HEK293 (cell line): ENCODE measurements at regions of chr19 and their contacts with region 1.

Region 1: GRCh38 chr19:16584248-16585141 is 12.3 kb upstream of the SLC35E1 start:
- H3K4me3 ChIP-seq: peak overlapping the region; percentile 23
- H3K27ac ChIP-seq: no peak overlapping the region
- H3K4me1 ChIP-seq: peaks cover 25% of the 10 kb centered on the region
- CTCF ChIP-seq: no peak

Region 2: DNA sequence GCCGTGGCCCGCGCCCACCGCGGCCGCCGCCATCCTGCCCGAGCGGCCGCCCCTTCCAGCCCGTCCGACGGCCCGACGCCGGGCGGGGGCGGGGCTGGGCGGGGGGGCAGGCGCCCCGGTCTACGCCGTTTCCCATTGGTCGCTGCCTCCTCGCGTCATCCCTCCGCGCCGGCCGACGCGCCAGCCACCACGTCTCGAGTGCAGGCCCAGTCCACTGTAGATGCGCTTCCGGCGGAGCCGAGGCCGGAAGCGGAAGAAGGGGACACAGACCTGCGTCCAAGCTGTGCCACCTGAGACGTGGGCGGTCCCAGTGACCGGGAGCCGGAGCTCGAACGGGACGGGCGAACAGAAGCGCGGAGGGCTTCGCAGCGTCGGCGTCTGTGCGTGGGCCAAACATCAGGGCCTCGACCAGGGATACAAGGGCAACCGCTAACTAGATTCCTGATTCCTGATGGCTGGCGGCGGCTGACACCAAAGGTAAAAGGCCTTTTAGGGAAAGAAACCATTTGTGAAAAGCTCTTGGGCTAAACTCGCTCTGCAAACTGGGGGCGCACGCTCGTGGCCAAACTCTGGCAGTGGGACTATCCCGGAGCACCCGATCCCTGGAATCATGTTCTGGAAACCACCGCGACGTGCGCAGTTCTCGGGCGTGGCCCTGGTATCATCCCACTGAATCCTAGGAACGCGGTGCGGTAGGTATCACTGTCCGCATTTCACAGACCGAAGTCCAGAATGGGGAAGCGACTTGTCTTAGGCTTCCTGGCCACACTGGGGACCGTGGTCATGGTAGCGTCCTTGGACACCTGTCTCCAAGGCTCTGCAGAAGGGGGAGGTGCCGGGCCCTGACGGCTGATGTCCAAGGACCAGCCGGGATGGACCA is 11.9 kb before region 1 on chr19 and contains the start of gene SLC35E1:
- CTCF ChIA-PET with region 1: interaction called, 3 read pairs
- POLR2A ChIA-PET with region 1: interaction called, 23 read pairs
- H3K4me3 ChIP-seq: peak within 1 kb of the TSS; percentile 82
- H3K27ac ChIP-seq: peak within 1 kb of the TSS; percentile 76
- H3K4me1 ChIP-seq: peaks cover 2% of the 10 kb centered on the region; the same call in 1 of the 2 replicates
- CTCF ChIP-seq: no peak; the same call in 1 of the 2 replicates